Heart left ventricle (tissue), 16 donors: ENCODE measurements at regions of chr9 and their contacts with region 1.

Region 1: DNA sequence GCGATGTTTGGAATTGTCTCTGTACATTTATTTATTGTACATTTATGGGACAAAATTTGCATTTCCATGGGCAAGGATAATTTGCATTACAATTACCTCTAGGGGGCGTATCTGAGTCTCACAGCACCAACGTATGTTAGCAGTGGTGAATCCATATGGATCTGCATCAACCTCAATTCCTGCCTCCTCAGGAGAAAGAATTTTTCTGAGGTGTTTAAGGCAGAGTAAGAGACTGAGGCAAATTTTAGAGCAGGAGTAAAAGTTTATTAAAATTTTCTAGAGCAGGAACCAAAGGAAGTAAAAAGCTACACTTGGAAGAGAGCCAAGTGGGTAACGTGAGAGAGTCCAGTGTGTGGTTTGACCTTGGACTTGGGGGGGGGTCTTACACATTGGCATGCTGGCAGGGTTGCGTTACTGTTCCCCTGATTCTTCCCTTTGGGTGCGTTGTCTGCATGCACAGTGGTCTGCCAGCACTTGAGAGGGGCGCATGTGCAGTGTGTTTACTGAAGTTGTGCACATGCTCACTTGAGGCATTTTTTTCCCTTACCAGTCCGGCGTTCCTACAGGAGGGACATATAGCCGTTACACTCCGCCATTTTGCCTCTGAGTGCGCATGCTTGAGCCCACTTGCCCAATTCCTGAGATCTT is 21.0 kb upstream of the RAB14 start:
- DNase-seq: no peak
- ATAC-seq: peak in 1 of 4 donors; percentile 56
- H3K4me3 ChIP-seq: no peak overlapping the region
- H3K27ac ChIP-seq: no peak overlapping the region
- H3K4me1 ChIP-seq: peaks cover 0 to 9% (median 0%) of the 10 kb centered on the region in 12 donors
- H3K27me3 ChIP-seq: no peaks in the 10 kb centered on the region
- CTCF ChIP-seq: peak; percentile 59 to 84 (median 75)
- POLR2A ChIP-seq: no peak

Region 2: GRCh38 chr9:121267689-121268597 is 45.3 kb after region 1 on chr9 and contains the start of gene GSN:
- intact Hi-C with region 1: loop called in 5 of 10 experiments (anchors 5 to 10 kb)
- DNase-seq: peak; percentile 88 to 94 (median 90)
- ATAC-seq: peak; percentile 65 to 92 (median 84)
- H3K4me3 ChIP-seq: peak within 1 kb of the TSS; percentile 75 to 95 (median 88)
- H3K27ac ChIP-seq: peak within 1 kb of the TSS; percentile 30 to 96 (median 88)
- H3K4me1 ChIP-seq: peaks cover 6 to 65% (median 54%) of the 10 kb centered on the region in 12 donors
- H3K27me3 ChIP-seq: no peaks in the 10 kb centered on the region
- CTCF ChIP-seq: peak in 4 of 12 donors; percentile 5 to 32 (median 8)
- POLR2A ChIP-seq: peak in 1 of 2 donors; percentile 81
- total RNA-seq, gene GSN: 422 to 2,088 (median 703) TPM

Region 3: GRCh38 chr9:121299467-121300234 is 77.0 kb after region 1 on chr9:
- intact Hi-C with region 1: loop called in 2 of 10 experiments (anchors 5 kb)
- DNase-seq: peak; percentile 88 to 93 (median 92)
- ATAC-seq: peak; percentile 35 to 78 (median 72)
- H3K4me3 ChIP-seq: peak overlapping the region; percentile 45 to 93 (median 68)
- H3K27ac ChIP-seq: peak overlapping the region; percentile 86 to 98 (median 94)
- H3K4me1 ChIP-seq: peaks cover 17 to 94% (median 84%) of the 10 kb centered on the region in 12 donors
- H3K27me3 ChIP-seq: no peaks in the 10 kb centered on the region
- CTCF ChIP-seq: peak in 3 of 12 donors; percentile 5 to 18 (median 15)
- POLR2A ChIP-seq: peak in 1 of 2 donors; percentile 93

Region 4: DNA sequence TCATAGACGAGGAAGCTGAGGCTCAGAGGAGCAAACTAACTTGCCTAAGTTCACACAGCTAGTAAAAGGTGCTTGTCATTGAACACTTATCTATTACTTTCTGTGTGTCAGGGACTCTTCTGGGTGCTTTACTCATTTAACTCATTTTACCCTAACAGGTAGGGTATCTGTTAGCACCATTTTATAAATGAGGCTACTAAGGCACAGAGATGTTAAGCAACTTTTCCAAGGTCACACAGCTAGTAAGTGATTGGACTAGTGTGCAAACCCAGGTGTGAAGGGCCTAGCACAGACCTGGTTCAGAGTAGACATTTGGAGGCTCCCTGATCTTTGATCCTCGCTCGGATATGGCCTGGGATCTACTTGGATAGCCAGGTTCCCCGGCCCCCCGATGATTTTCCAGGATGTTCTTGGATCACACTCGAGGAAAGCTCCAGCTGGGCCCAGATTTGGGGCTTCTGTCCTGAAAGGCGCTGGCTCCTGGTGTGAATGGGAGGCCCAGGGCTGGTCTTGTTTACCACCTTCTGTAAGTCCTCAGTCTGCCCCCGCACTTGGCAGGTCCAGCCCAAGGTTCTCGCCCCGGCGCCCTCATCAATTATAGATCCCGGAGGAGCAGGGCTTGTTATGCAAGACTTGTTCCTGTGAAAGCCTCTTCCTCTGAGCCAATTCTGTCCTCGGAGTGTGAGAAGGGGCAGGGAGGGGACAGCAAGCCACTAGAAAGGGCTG is 82.8 kb after region 1 on chr9:
- intact Hi-C with region 1: loop called in 5 of 10 experiments (anchors 5 to 10 kb)
- DNase-seq: peak; percentile 78 to 89 (median 81)
- ATAC-seq: peak; percentile 28 to 77 (median 62)
- H3K4me3 ChIP-seq: peak overlapping the region in 9 of 12 donors; percentile 1 to 93 (median 67)
- H3K27ac ChIP-seq: peak overlapping the region in 11 of 12 donors; percentile 12 to 97 (median 89)
- H3K4me1 ChIP-seq: peaks cover 0 to 86% (median 45%) of the 10 kb centered on the region in 12 donors
- H3K27me3 ChIP-seq: no peaks in the 10 kb centered on the region
- CTCF ChIP-seq: no peak
- POLR2A ChIP-seq: no peak

Region 5: GRCh38 chr9:121312166-121312565 is 89.5 kb after region 1 on chr9:
- intact Hi-C with region 1: loop called in 3 of 10 experiments (anchors 5 to 10 kb)
- DNase-seq: peak in 2 of 5 donors; percentile 18 to 26
- ATAC-seq: no peak
- H3K4me3 ChIP-seq: no peak overlapping the region
- H3K27ac ChIP-seq: peak overlapping the region in 1 of 12 donors; percentile 62
- H3K4me1 ChIP-seq: peaks cover 0 to 81% (median 16%) of the 10 kb centered on the region in 12 donors
- H3K27me3 ChIP-seq: no peaks in the 10 kb centered on the region
- CTCF ChIP-seq: no peak
- POLR2A ChIP-seq: no peak

Region 6: DNA sequence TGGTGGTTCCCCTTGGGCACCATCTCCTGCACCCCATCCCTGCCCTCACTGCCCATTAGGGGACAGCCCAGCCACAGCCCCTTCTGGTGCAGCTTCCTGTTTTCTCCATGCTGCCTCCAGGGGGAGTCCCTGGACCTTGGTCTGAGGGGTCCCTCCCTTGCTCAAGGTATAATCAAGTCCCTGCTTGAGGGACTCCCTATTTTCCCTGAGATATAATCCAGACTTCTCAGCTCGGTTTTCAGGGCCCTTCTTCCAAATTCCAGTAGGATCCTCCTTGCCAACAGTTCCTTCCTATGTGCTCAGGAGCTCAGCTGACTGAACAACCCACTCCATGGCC is 398.4 kb after region 1 on chr9:
- intact Hi-C with region 1: no loop called
- DNase-seq: peak in 1 of 5 donors; percentile 26
- ATAC-seq: peak in 1 of 4 donors; percentile 6
- H3K4me3 ChIP-seq: no peak overlapping the region
- H3K27ac ChIP-seq: peak overlapping the region in 9 of 12 donors; percentile 13 to 84 (median 77)
- H3K4me1 ChIP-seq: peaks cover 3 to 78% (median 46%) of the 10 kb centered on the region in 12 donors
- H3K27me3 ChIP-seq: no peaks in the 10 kb centered on the region
- CTCF ChIP-seq: peak in 11 of 12 donors; percentile 13 to 62 (median 39)
- POLR2A ChIP-seq: no peak